ENCODE measurements at regions of chr2 and their contacts with region 1.

Region 1: GRCh38 chr2:39583781-39584180 is 81.9 kb upstream of the TMEM178A start:
- DNase-seq: no peak
- H3K4me3 ChIP-seq: no peak overlapping the region
- H3K27ac ChIP-seq: no peak overlapping the region
- H3K4me1 ChIP-seq: no peaks in the 10 kb centered on the region
- CTCF ChIP-seq: no peak

Region 2: GRCh38 chr2:39179974-39180970 is 403.5 kb before region 1 on chr2:
- CTCF ChIA-PET with region 1: no interaction called
- POLR2A ChIA-PET with region 1: no interaction called
- intact Hi-C with region 1: no loop called
- DNase-seq: no peak
- H3K4me3 ChIP-seq: no peak overlapping the region
- H3K27ac ChIP-seq: no peak overlapping the region
- H3K4me1 ChIP-seq: no peaks in the 10 kb centered on the region
- CTCF ChIP-seq: no peak

Region 3: GRCh38 chr2:39476524-39476923 is 107.3 kb before region 1 on chr2:
- CTCF ChIA-PET with region 1: no interaction called
- POLR2A ChIA-PET with region 1: no interaction called
- intact Hi-C with region 1: no loop called
- DNase-seq: peak; percentile 66
- H3K4me3 ChIP-seq: peak overlapping the region; percentile 47
- H3K27ac ChIP-seq: peak overlapping the region; percentile 49
- H3K4me1 ChIP-seq: peaks cover 26% of the 10 kb centered on the region
- CTCF ChIP-seq: no peak

Region 4: DNA sequence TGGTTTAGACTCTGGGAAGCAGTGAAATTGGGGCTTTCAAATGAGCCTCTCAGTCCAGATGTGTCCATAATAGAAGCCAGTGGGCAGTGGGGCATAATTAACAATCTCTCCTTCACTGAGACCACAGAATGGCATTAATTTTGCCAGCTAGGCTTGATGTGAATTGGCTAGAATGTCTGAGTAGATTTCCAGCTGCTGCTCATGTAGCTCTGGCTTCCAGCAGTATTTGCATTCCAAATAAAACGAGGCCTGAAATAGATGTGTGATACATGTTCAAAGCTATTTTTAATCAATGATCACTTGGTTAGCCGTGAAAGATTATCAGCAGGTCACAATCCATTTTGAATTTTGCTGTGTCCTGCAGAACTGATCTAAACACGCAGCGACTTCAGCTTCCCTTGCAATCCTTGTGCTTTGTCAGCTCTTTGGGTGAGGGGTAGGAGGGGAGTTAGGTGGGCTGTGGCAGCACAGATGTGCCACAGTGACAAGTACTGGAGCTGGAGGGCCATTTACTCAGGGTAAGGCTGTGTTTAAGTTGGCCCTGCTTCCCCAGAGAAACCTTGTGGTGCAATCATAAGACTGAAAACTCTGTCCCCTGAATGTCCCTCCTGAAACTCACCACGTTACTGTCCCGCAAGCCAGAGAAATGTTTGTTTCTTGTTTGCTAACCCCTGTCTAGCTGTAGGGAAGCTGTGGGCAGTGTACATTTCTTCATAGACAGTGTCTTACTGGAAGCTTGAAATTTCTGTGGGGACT is 25.1 kb after region 1 on chr2:
- CTCF ChIA-PET with region 1: no interaction called
- POLR2A ChIA-PET with region 1: interaction called, 5 read pairs
- intact Hi-C with region 1: loop called (anchors 2 kb)
- DNase-seq: no peak
- H3K4me3 ChIP-seq: no peak overlapping the region
- H3K27ac ChIP-seq: no peak overlapping the region
- H3K4me1 ChIP-seq: no peaks in the 10 kb centered on the region
- CTCF ChIP-seq: no peak